H1 (cell line): ENCODE measurements at regions of chr10 and their contacts with region 1.

Region 1: DNA sequence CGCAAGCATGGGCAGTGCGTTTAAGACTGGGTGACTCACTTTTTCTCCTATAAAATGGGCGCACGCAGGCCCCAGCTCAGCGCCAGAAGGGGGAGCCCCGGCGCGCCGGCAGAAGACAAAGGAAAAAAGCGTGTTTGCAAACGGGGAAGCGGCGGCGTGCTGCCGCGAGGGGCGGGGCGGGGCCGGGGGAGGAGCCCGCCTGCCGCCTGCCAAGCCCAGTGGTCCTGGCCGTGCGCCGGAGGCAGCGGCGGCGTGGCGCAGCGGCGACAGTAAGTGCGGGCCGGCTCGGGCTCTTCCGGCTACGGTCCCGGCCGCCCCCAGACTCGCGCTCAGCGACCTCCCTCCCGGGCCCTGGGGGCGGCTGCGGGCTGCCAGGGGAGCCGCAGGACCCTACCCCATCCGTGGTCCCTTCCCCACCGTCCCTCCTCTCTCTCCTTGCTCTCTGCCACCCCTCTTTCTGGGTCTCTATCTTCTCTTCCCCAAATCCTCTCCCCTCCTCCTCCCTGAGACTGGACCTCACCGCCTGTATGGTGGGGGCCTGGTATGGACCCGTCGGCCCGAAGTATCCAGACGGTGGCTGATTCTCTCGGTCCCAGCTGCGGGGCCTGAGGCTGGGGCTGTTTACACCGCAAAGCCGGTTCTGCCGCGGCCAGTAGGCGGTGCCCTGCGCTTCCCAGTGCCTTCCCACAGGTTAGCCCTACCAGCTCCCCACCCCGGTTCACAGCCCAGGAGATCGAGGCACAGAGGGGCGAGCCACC is at the start of gene SLC29A3:
- DNase-seq: peak; percentile 44 to 87
- H3K4me3 ChIP-seq: peak within 1 kb of the TSS; percentile 45 to 87 (median 68)
- H3K27ac ChIP-seq: peak within 1 kb of the TSS; percentile 11; the same call in 1 of the 2 replicates
- H3K4me1 ChIP-seq: peaks cover 2 to 10% (median 3%) of the 10 kb centered on the region in 4 experiments; a peak in 4 of 7 replicates
- H3K27me3 ChIP-seq: no peaks in the 10 kb centered on the region
- CTCF ChIP-seq: peak; percentile 76 to 89 (median 88)
- EP300 ChIP-seq: no peak
- POLR2A ChIP-seq: peak in 1 of 2 experiments; percentile 74; a peak in 2 of 3 replicates
- RAD21 ChIP-seq: peak; percentile 76 to 85
- total RNA-seq, gene SLC29A3: 14.0 and 15.2 TPM in 2 replicates

Region 2: DNA sequence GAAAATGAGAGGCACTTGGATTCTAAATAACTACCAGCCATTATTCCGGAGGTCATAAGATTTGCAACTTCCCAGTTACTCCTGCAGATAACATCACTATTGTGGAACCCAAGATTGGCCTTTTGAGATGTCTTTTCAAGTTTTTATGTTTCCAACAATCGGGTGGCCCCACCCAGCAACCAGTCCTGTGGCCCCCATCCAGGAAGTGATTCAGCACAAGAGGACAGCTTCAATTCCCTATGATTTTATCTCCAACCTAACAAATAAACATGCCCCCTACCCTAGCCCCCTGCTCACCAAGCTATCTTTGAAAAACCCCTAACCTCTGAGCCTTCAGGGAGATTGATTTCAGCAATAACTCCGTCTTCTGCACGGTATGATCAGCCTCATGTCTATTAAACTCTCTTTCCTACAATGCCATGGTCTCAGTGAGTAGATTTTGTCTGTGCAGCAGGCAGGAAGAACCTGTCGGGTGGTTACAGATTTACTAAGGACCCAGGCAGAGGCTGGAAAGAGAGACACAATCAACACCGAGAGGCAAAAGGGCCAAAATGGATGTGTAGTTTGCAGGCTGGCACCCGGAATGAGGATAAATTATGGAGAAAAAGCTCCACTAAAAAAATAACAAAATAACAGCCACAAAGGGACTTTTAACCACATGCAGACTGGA is 190.8 kb before region 1 on chr10:
- CTCF ChIA-PET with region 1: no interaction called
- POLR2A ChIA-PET with region 1: no interaction called
- DNase-seq: no peak
- H3K4me3 ChIP-seq: no peak overlapping the region
- H3K27ac ChIP-seq: no peak overlapping the region
- H3K4me1 ChIP-seq: peaks cover 0 to 3% (median 0%) of the 10 kb centered on the region in 4 experiments; a peak in 1 of 7 replicates
- H3K27me3 ChIP-seq: 0 out of 7 replicates have a peak, but pooled peaks cover 0 to 2% (median 0%) of the 10 kb centered on the region in 4 experiments
- CTCF ChIP-seq: no peak
- EP300 ChIP-seq: no peak
- POLR2A ChIP-seq: no peak
- RAD21 ChIP-seq: no peak

Region 3: GRCh38 chr10:71244431-71245419 is 74.5 kb before region 1 on chr10:
- CTCF ChIA-PET with region 1: no interaction called
- POLR2A ChIA-PET with region 1: no interaction called
- DNase-seq: no peak
- H3K4me3 ChIP-seq: no peak overlapping the region
- H3K27ac ChIP-seq: no peak overlapping the region
- H3K4me1 ChIP-seq: peaks cover 0 to 1% (median 0%) of the 10 kb centered on the region in 4 experiments; a peak in 2 of 7 replicates
- H3K27me3 ChIP-seq: no peaks in the 10 kb centered on the region; a peak in 1 of 7 replicates
- CTCF ChIP-seq: no peak
- EP300 ChIP-seq: no peak
- POLR2A ChIP-seq: no peak
- RAD21 ChIP-seq: no peak

Region 4: GRCh38 chr10:71302874-71303568 is 16.2 kb before region 1 on chr10:
- CTCF ChIA-PET with region 1: interaction called, 32 read pairs
- POLR2A ChIA-PET with region 1: interaction called, 3 read pairs
- DNase-seq: no peak
- H3K4me3 ChIP-seq: no peak overlapping the region
- H3K27ac ChIP-seq: no peak overlapping the region
- H3K4me1 ChIP-seq: peaks cover 0 to 4% (median 0%) of the 10 kb centered on the region in 4 experiments; a peak in 3 of 7 replicates
- H3K27me3 ChIP-seq: no peaks in the 10 kb centered on the region
- CTCF ChIP-seq: peak in 2 of 3 experiments; percentile 31 to 60; a peak in 3 of 4 replicates
- EP300 ChIP-seq: no peak
- POLR2A ChIP-seq: no peak
- RAD21 ChIP-seq: peak; percentile 45 to 50

Region 5: DNA sequence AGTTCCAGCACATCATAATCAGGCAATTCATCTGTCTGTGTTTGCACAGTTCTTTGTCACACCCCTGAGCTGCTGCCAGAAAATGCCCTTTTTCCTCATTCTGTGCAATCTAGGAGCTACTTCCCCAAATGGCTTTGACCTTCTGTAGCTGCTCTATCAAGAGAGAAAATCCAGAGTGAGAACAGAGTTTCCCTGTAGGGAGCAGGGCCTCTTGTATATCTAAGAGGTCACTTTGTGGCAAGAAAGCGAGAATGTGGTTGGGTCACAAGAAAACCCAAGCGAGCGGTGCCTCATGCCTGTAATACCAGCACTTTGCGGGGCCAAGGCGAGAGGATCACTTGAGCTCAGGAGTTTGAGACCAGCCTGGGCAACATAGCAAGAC is 24.2 kb after region 1 on chr10:
- CTCF ChIA-PET with region 1: interaction called, 52 read pairs
- POLR2A ChIA-PET with region 1: interaction called, 5 read pairs
- DNase-seq: no peak
- H3K4me3 ChIP-seq: no peak overlapping the region
- H3K27ac ChIP-seq: peak overlapping the region; percentile 60; the same call in 1 of the 2 replicates
- H3K4me1 ChIP-seq: peaks cover 19 to 34% (median 27%) of the 10 kb centered on the region in 4 experiments
- H3K27me3 ChIP-seq: no peaks in the 10 kb centered on the region
- CTCF ChIP-seq: no peak
- EP300 ChIP-seq: no peak
- POLR2A ChIP-seq: no peak
- RAD21 ChIP-seq: no peak

Region 6: DNA sequence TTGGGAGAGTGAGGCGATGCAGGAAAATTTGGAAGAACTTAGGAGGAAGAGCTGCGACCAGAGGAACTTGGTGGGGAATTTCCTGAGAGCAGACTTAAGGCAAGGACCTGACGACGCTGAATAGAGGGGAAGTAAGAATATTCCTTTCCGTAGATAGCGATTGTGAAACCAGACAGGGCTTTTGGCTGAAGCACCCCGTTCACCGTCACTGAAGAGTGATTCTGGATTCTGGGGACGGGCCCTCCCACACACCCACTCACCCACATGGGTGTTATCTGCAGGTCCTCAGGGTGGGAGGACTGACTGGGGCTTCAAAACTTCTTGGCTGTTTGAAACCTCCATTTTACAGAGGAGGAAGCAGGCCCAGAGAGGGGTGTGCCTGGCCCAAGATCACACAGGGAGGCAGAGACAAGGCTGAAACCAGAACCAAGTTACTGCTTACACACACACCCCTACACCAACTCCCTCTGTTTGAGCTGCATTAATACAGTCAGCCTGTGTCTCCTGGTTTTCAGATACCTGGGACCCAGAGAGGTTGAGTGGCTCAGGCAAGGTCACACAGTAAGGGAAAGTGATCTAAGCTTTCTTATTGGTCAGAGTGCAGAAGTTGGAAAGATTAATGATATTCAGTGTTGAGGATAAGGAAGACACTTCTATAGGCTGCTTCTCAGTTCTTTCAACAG is 40.3 kb after region 1 on chr10:
- CTCF ChIA-PET with region 1: interaction called, 401 read pairs
- POLR2A ChIA-PET with region 1: no interaction called
- DNase-seq: no peak
- H3K4me3 ChIP-seq: no peak overlapping the region
- H3K27ac ChIP-seq: no peak overlapping the region
- H3K4me1 ChIP-seq: no peaks in the 10 kb centered on the region
- H3K27me3 ChIP-seq: no peaks in the 10 kb centered on the region
- CTCF ChIP-seq: no peak
- EP300 ChIP-seq: no peak
- POLR2A ChIP-seq: no peak
- RAD21 ChIP-seq: no peak

Region 7: GRCh38 chr10:71390461-71390835 is 71.2 kb after region 1 on chr10:
- CTCF ChIA-PET with region 1: interaction called, 401 read pairs
- POLR2A ChIA-PET with region 1: interaction called, 3 read pairs
- DNase-seq: no peak
- H3K4me3 ChIP-seq: no peak overlapping the region
- H3K27ac ChIP-seq: no peak overlapping the region
- H3K4me1 ChIP-seq: peaks cover 0 to 3% (median 0%) of the 10 kb centered on the region in 4 experiments; a peak in 1 of 7 replicates
- H3K27me3 ChIP-seq: peaks cover 0 to 12% (median 7%) of the 10 kb centered on the region in 4 experiments; a peak in 4 of 7 replicates
- CTCF ChIP-seq: no peak
- EP300 ChIP-seq: no peak
- POLR2A ChIP-seq: no peak
- RAD21 ChIP-seq: no peak

Region 8: GRCh38 chr10:71431239-71432100 is 112.2 kb after region 1 on chr10:
- CTCF ChIA-PET with region 1: interaction called, 14 read pairs
- POLR2A ChIA-PET with region 1: no interaction called
- DNase-seq: peak in 1 of 2 experiments; percentile 58
- H3K4me3 ChIP-seq: no peak overlapping the region
- H3K27ac ChIP-seq: no peak overlapping the region
- H3K4me1 ChIP-seq: peaks cover 0 to 2% (median 0%) of the 10 kb centered on the region in 4 experiments; a peak in 2 of 7 replicates
- H3K27me3 ChIP-seq: no peaks in the 10 kb centered on the region
- CTCF ChIP-seq: peak; percentile 36 to 62 (median 54)
- EP300 ChIP-seq: no peak
- POLR2A ChIP-seq: no peak
- RAD21 ChIP-seq: peak in 1 of 2 experiments; percentile 38; a peak in 2 of 4 replicates

Region 9: DNA sequence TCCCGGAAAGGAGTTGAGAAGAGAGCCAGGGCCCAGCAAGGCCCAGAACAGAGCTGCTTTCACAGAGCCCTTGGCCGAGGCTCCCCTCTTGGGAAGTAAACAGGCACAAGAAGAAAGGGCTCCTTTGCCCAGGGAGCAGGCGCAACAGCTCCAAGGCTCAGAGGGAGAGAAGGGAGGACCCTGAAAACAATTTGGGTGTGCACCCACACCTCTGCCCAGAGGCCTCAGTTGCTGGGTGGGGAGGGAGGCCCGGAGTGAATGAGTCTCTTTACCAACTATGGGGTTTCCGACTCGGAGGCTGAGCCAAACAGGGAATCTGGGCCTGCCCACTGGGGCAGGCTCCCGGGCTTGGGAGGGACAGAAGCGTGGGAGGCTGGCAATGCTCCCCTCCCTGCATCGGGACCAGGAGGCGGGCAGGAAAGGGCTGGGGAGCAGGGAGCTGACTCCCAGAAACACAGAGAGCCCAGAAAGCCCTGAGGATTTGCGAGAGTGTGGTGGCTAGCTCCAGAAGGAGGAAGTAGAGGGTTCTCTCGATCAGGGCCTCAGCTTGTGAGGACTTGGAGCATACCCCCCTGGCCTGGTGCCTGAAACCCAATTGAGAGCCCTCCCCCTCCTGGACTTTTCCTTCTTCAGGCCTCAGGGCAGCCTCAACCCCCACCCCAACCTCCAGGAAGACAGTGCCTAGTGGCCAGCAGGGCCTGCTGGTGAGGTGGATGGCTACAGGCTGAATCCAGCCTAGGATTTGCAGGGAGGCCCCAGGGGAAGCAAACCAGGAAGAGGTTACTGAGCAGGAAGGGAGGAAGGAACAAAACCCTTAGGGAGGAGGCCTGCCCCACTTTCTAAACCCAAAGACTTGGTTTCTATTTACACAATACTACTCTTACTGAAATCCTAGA is 394.2 kb after region 1 on chr10:
- CTCF ChIA-PET with region 1: interaction called, 109 read pairs
- POLR2A ChIA-PET with region 1: no interaction called
- DNase-seq: no peak
- H3K4me3 ChIP-seq: no peak overlapping the region
- H3K27ac ChIP-seq: no peak overlapping the region
- H3K4me1 ChIP-seq: peaks cover 0 to 6% (median 0%) of the 10 kb centered on the region in 4 experiments; a peak in 1 of 7 replicates
- H3K27me3 ChIP-seq: peaks cover 0 to 3% (median 0%) of the 10 kb centered on the region in 4 experiments; a peak in 1 of 7 replicates
- CTCF ChIP-seq: peak in 2 of 3 experiments; percentile 10 to 15; a peak in 2 of 4 replicates
- EP300 ChIP-seq: no peak
- POLR2A ChIP-seq: no peak
- RAD21 ChIP-seq: no peak; a peak in 1 of 4 replicates